ENCODE measurements at regions of chr11 and their contacts with region 1.

Region 1: GRCh38 chr11:125164422-125165110 is at the start of gene PKNOX2:
- DNase-seq: peak; percentile 57
- H3K4me3 Mint-ChIP-seq: peak within 1 kb of the TSS; percentile 92
- H3K27ac Mint-ChIP-seq: no peak within 1 kb of the TSS
- H3K4me1 Mint-ChIP-seq: peaks cover 6% of the 10 kb centered on the region
- H3K27me3 Mint-ChIP-seq: peaks cover 16% of the 10 kb centered on the region
- CTCF ChIP-seq: peak; percentile 46
- total RNA-seq, gene PKNOX2: not detected in 2 replicates

Region 2: DNA sequence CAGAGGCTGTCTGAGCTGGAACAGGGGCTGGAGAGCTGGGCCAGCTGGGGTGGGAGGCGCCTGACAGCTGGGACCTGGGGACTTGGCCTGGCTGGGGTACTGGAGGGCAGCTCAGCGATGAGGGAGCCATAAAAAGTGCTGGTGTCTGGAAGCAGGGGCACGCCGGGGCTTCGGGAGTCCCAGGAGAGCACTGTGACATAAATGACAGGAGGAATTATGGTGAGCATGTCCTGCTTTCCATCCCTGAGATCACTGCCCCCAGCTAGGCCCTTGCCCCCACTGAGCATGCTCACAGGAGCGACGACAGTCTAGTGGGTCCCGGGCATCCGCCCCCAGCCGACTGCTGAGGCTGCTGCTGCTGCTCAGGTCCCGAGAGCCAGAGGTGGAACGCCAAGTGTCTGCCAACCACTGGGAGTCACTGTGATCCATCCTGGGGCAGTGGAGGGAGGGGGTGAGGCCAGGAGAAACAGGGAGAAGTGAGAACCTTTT is 273.1 kb before region 1 on chr11:
- CTCF ChIA-PET with region 1: no interaction called
- POLR2A ChIA-PET with region 1: no interaction called
- intact Hi-C with region 1: no loop called
- DNase-seq: no peak
- H3K4me3 Mint-ChIP-seq: no peak overlapping the region
- H3K27ac Mint-ChIP-seq: no peak overlapping the region
- H3K4me1 Mint-ChIP-seq: peaks cover 4% of the 10 kb centered on the region
- H3K27me3 Mint-ChIP-seq: no peaks in the 10 kb centered on the region
- CTCF ChIP-seq: no peak

Region 3: DNA sequence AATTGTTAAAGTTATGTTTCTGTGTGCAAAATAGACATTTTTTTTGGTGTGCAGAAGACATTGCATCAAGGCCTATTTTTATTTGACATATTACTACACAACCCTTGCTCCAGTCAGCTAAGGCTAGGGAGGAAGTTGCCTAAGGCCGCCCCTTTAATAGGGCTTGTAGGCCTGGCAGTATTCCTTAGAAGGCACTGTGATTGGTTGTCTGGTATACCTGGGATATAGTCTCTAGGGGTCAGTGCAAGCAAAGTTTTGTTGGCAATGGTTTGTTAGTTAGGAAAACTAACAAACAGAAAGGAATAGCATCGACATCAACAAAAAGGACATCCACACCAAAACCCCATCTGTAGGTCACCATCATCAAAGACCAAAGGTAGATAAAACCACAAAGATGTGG is 193.6 kb before region 1 on chr11:
- CTCF ChIA-PET with region 1: interaction called, 10 read pairs
- POLR2A ChIA-PET with region 1: interaction called, 3 read pairs
- intact Hi-C with region 1: no loop called
- DNase-seq: peak; percentile 66
- H3K4me3 Mint-ChIP-seq: no peak overlapping the region
- H3K27ac Mint-ChIP-seq: no peak overlapping the region
- H3K4me1 Mint-ChIP-seq: no peaks in the 10 kb centered on the region
- H3K27me3 Mint-ChIP-seq: no peaks in the 10 kb centered on the region
- CTCF ChIP-seq: peak; percentile 22

Region 4: DNA sequence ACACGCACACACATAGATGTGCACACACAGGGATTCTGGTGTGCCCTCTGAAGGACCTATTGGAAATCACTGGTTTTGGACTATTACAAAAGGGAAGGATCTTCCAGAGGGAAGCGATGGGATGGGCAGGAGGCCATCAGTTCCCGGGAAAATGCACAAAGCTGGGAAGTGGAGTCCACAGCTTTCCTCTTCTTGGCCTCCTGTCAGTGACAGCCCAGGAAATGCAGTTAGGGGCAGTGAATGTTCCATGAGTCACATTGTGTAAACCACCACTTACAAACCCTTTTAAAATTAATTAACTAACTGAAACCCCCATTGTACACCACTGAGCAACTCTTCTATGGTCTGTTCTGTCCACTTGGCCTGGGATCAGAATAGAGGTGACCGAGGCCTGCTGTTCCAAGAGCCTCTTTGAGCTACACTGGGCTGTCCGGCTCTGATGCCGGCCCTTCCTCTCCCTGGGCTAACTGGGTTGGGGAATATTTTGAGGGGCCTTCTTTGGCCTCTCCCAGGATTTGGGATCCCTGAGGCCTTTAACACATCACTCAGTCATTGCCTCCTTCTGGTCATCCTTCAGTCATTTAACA is 193.8 kb after region 1 on chr11:
- CTCF ChIA-PET with region 1: interaction called, 13 read pairs
- POLR2A ChIA-PET with region 1: no interaction called
- intact Hi-C with region 1: no loop called
- DNase-seq: no peak
- H3K4me3 Mint-ChIP-seq: no peak overlapping the region
- H3K27ac Mint-ChIP-seq: no peak overlapping the region
- H3K4me1 Mint-ChIP-seq: no peaks in the 10 kb centered on the region
- H3K27me3 Mint-ChIP-seq: no peaks in the 10 kb centered on the region
- CTCF ChIP-seq: no peak

Measured in MCF 10A (cell line).